Ascending aorta (tissue), 2 donors: ENCODE measurements at regions of chr11 and their contacts with region 1.

Region 1: DNA sequence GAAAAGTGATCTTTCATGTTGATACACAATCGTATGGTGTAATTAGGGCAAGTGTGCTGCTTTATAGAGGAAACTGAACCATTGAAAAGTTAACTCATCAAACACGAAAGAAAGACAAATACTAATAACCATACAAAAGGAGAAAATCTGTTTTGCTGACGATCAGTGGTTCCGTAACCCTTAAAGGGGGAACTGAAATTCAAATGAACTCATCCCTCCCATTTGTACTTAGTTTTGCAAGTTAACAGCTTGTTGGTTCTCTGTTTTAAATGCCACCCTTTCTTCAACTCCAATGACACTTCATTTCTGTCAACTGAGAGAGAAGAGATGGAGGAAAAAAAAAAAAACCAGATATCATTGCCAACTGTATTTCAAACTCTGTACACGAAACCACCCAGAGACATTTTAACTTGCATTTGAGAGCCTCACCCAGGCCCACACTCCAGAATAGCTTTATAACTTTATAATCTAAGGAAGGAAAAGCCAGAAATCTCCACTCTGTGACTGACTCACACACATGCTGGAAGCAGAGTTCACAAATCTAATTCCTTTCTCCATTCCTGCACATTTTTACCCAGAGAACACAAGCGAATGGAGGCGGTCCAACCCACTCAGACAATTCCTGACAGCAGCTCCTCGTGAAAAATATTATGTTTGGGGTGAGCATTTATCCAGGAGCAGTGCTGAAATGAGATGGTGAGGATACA is 17.4 kb upstream of the CSNK2A3 start:
- DNase-seq: no peak
- H3K4me3 ChIP-seq: no peak overlapping the region
- H3K27ac ChIP-seq: no peak overlapping the region
- H3K4me1 ChIP-seq: peaks cover 0 to 3% of the 10 kb centered on the region in 2 donors
- H3K27me3 ChIP-seq: no peaks in the 10 kb centered on the region
- CTCF ChIP-seq: no peak

Region 2: DNA sequence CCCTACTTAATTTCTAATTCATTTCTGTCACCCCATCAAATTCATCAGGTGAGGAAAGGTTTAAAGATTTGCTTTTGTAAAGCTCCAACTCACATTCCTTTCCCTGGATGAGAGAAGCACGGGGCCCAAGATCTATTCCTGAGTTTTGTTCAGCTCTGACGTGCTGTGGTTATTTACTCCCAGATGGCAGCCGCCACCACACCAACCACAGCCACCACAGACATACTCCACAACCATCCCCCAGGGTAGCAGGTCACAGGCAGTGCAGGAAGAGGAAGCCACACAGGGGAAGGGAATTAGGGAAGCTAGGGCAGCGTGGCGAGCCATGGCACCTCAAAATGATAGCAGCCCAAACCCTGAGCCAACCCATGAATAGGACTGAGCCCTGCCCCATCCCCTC is 46.1 kb after region 1 on chr11:
- intact Hi-C with region 1: loop called (anchors 2 kb)
- DNase-seq: no peak
- H3K4me3 ChIP-seq: no peak overlapping the region
- H3K27ac ChIP-seq: peak overlapping the region; percentile 80 to 84
- H3K4me1 ChIP-seq: peaks cover 14 to 23% of the 10 kb centered on the region in 2 donors
- H3K27me3 ChIP-seq: no peaks in the 10 kb centered on the region
- CTCF ChIP-seq: no peak

Region 3: DNA sequence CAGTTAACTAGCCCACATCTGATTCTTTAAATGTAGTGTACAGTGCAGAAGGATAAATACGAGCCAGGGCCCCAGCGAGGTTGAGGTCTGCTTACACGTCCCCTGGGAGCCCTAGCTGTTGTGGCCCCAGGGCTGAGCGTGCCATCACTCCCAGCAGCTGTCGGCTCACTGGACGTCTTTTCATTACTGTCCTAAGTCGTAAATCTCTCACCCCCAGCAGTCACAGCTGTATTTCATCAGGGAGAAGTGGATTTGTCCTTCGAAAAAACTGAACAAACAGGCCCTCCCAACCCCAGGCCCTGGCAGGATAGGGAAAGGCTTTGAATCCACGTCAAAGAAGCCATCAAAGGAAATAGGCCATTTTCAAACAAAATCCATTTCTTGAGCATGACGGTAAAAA is 93.0 kb after region 1 on chr11:
- intact Hi-C with region 1: no loop called
- DNase-seq: no peak
- H3K4me3 ChIP-seq: no peak overlapping the region
- H3K27ac ChIP-seq: no peak overlapping the region
- H3K4me1 ChIP-seq: peaks cover 0 to 21% of the 10 kb centered on the region in 2 donors
- H3K27me3 ChIP-seq: no peaks in the 10 kb centered on the region
- CTCF ChIP-seq: no peak